Activated CD4-positive, alpha-beta T cell treated with anti-CD3 and anti-CD28 coated beads, Interleukin-2, amount 10 ng/mL, durations not matched to agents 24 days and 14 days (primary cell): ENCODE measurements at regions of chr1 and their contacts with region 1.

Region 1: GRCh38 chr1:51189421-51190073 is 46.5 kb upstream of the RNF11 start:
- DNase-seq: peak; percentile 81
- H3K4me3 Mint-ChIP-seq: no peak overlapping the region
- H3K27ac Mint-ChIP-seq: no peak overlapping the region
- H3K4me1 Mint-ChIP-seq: no peaks in the 10 kb centered on the region
- H3K27me3 Mint-ChIP-seq: peaks cover 5% of the 10 kb centered on the region

Region 2: DNA sequence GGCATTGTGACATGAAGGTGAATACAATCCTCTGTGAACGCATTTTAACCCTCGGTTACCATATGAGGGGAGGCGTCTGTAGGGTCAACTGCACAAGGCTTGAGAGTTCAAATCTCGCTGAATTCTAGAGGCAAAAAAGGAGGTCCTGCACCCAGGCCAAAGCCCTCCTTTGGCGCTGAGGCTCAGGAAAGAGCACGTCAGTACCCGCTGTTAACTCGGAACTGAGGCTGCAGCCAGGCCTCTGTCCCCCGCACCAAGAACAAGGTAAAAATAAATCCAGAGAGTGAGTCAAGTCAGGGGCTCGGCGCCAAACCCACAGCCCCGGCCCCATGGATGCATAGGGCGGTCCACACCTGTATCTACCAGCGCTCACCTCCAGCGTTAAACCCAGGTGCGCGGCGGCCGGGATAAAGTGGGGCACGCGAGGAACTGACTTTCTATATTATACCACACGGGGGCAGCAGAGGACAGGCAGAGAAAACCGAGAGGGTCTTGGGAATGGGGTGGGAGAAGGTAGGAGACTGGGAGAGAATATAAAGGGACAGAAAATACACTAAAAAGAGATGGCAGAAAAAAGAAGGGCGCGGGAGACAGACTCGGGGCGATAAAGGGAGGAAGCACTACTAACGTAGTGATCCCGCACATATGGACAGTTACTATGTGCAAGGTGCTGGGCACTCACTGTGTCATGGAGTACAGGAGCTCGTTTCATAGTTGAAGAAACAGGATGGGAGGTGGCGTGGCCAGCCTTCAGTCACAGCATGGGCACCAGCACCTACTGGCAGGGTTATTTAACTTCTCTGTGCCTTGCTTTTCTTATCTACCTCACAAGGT is 821.2 kb before region 1 on chr1:
- intact Hi-C with region 1: loop called (anchors 10 kb)
- DNase-seq: peak; percentile 80
- H3K4me3 Mint-ChIP-seq: no peak overlapping the region
- H3K27ac Mint-ChIP-seq: no peak overlapping the region
- H3K4me1 Mint-ChIP-seq: peaks cover 1% of the 10 kb centered on the region
- H3K27me3 Mint-ChIP-seq: peaks cover 37% of the 10 kb centered on the region

Region 3: GRCh38 chr1:50774759-50775351 is 414.7 kb before region 1 on chr1:
- intact Hi-C with region 1: loop called (anchors 1 kb)
- DNase-seq: peak; percentile 65
- H3K4me3 Mint-ChIP-seq: no peak overlapping the region
- H3K27ac Mint-ChIP-seq: no peak overlapping the region
- H3K4me1 Mint-ChIP-seq: peaks cover 2% of the 10 kb centered on the region
- H3K27me3 Mint-ChIP-seq: no peaks in the 10 kb centered on the region

Region 4: GRCh38 chr1:50873458-50874187 is 315.9 kb before region 1 on chr1:
- intact Hi-C with region 1: loop called (anchors 1 kb)
- DNase-seq: peak; percentile 88
- H3K4me3 Mint-ChIP-seq: peak overlapping the region; percentile 55
- H3K27ac Mint-ChIP-seq: no peak overlapping the region
- H3K4me1 Mint-ChIP-seq: peaks cover 5% of the 10 kb centered on the region
- H3K27me3 Mint-ChIP-seq: no peaks in the 10 kb centered on the region

Region 5: DNA sequence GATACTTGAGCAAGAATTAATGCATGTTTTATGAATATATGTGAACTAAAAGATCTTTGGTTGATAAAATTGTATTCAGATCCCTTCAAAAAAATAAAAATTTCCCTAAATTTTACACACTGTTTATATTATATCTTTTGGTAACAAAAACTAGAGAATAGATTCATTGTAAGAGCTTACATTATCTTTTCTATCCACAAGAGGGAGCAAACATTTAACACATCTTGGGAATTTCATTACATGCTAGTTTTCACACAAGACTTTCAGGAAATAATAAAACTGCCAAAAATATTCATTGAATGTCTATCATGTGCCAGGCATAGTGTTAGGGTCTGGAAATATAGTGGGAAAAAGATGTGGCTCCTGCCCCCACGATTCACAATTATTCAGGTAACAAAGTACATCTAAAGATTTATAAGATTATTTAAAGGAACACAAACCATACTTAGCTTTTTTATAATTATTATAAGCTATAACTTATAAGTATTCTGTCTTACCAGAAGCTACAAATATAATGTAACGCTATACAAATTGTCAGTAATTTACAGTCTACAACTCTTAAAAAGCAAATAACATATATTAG is 260.1 kb before region 1 on chr1:
- intact Hi-C with region 1: loop called (anchors 1 kb)
- DNase-seq: no peak
- H3K4me3 Mint-ChIP-seq: no peak overlapping the region
- H3K27ac Mint-ChIP-seq: no peak overlapping the region
- H3K4me1 Mint-ChIP-seq: peaks cover 17% of the 10 kb centered on the region
- H3K27me3 Mint-ChIP-seq: no peaks in the 10 kb centered on the region

Region 6: DNA sequence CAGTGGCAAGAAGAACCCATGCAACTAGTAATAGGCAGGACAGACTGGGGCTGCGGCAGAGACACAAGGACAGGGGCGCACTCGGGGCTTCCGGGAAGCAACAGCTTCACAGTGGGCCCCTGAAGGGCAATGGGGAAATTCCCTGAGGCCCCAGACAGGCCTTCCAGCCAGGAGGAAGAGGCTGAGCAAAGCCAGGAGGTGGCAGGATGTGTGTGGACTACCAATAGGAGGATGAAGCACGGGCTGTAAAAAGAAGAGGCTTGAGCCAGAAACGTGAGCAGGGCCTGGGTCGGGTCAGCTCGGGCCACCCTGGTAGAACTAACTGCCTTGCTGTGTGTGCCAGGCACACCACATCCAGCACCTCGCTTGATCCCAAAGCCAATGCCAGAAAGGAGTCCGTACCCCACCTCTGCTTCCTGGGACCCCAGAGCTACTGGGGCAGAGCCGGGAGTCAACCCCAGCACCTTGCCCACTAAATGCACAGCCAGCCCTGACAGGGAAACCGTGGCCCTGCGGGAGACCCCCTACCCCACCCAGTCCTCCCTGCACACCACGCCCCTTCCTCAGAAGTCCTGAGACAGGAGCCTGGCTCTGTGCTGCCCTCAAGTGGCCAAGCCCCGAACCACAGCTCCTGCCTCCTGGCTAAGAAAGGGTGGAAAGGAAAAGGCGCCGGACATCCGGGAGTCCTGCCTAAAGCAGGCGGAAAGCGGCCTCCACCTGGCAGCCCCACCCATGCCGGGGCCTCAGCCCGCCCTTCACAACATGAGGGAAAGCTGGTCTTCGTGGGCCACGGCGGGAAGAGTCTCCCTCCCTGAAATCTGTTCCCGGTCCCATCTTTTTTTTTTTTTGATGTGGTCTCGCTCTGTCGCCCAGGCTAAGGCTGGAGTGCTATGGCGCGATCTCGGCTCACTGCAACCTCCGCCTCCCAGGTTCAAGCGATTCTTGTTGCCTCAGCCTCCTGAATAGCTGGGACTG is 107.1 kb after region 1 on chr1:
- intact Hi-C with region 1: loop called (anchors 2 kb)
- DNase-seq: peak; percentile 94
- H3K4me3 Mint-ChIP-seq: peak overlapping the region; percentile 74
- H3K27ac Mint-ChIP-seq: peak overlapping the region; percentile 70
- H3K4me1 Mint-ChIP-seq: peaks cover 26% of the 10 kb centered on the region
- H3K27me3 Mint-ChIP-seq: no peaks in the 10 kb centered on the region